PC-9 (cell line): ENCODE measurements at regions of chr5 and their contacts with region 1.

Region 1: GRCh38 chr5:138737494-138738265 is 15.5 kb upstream of the CTNNA1 start:
- DNase-seq: peak; percentile 23 to 50
- H3K4me3 ChIP-seq: no peak overlapping the region
- H3K27ac ChIP-seq: no peak overlapping the region
- H3K4me1 ChIP-seq: peaks cover 19% of the 10 kb centered on the region
- H3K27me3 ChIP-seq: no peaks in the 10 kb centered on the region
- CTCF ChIP-seq: no peak

Region 2: DNA sequence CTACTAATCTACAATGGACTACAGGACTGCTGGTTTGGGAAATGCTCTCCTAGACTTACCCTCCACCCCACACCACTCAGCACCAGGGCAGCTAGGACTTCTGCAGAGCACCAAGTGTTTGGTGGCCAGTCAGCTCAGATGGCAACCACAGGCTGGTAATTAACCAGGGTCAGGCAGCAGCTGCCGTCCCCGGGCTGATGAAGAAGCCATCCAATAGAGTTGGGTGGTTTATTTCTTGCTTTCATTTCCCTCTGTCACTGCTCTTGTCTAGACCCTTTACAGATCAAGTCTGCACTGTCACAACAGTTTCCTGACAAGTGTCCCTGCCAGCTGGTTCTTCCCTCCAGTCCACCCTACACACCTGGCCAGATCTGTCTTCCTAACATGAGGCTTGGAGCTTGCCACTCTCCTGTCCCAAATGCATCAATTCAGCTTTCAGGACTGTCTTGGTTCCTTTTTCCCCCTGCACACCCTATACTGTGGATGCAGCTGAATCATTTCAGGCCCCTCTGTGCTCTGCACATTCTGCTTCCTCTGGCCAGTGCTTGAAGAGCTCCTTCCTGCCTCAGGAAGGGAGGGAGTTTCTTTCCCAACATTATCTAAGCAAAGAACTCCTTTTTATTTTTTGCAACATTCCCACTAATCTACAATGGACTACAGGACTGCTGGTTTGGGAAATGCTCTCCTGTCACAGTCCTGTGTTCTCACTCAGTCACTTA is 132.3 kb before region 1 on chr5:
- CTCF ChIA-PET with region 1: no interaction called
- POLR2A ChIA-PET with region 1: interaction called, 10 read pairs
- intact Hi-C with region 1: no loop called
- DNase-seq: no peak
- H3K4me3 ChIP-seq: no peak overlapping the region
- H3K27ac ChIP-seq: no peak overlapping the region
- H3K4me1 ChIP-seq: peaks cover 29% of the 10 kb centered on the region
- H3K27me3 ChIP-seq: no peaks in the 10 kb centered on the region
- CTCF ChIP-seq: no peak